Activated naive CD4-positive, alpha-beta T cell treated with anti-CD3 and anti-CD28 coated beads for 36 hours (primary cell): ENCODE measurements at regions of chr18 and their contacts with region 1.

Region 1: GRCh38 chr18:70454704-70455322 is 166.0 kb downstream of the SOCS6 start:
- DNase-seq: peak; percentile 45
- H3K4me3 Mint-ChIP-seq: no peak overlapping the region
- H3K27ac Mint-ChIP-seq: no peak overlapping the region
- H3K4me1 Mint-ChIP-seq: no peaks in the 10 kb centered on the region
- H3K27me3 Mint-ChIP-seq: peaks cover 4% of the 10 kb centered on the region

Region 2: GRCh38 chr18:68847219-68847837 is 1607.5 kb before region 1 on chr18:
- CTCF ChIA-PET with region 1: no interaction called
- intact Hi-C with region 1: loop called (anchors 2 kb)
- DNase-seq: no peak
- H3K4me3 Mint-ChIP-seq: no peak overlapping the region
- H3K27ac Mint-ChIP-seq: no peak overlapping the region
- H3K4me1 Mint-ChIP-seq: no peaks in the 10 kb centered on the region
- H3K27me3 Mint-ChIP-seq: no peaks in the 10 kb centered on the region

Region 3: GRCh38 chr18:69636529-69637301 is 818.1 kb before region 1 on chr18:
- CTCF ChIA-PET with region 1: no interaction called
- intact Hi-C with region 1: loop called (anchors 10 kb)
- DNase-seq: peak; percentile 34
- H3K4me3 Mint-ChIP-seq: no peak overlapping the region
- H3K27ac Mint-ChIP-seq: no peak overlapping the region
- H3K4me1 Mint-ChIP-seq: no peaks in the 10 kb centered on the region
- H3K27me3 Mint-ChIP-seq: no peaks in the 10 kb centered on the region

Region 4: DNA sequence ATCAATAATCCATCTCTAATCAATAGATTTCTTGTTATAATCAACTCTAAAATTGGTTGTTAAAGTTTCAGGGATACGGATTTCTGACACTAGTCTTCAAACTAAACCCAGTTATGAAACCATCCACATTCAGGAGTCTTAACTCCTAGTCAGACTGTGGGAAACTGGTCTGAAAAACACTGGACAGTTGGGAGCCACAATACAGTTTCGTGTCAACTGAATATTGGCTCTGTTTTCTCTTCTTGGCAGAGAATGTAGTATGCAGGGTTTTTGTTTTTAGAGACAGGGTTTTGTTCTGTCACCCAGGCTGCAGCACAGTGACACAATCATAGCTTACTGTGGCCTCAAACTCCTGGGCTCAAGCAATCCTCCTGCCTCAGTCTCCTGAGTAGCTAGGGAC is 372.4 kb before region 1 on chr18:
- CTCF ChIA-PET with region 1: no interaction called
- intact Hi-C with region 1: loop called (anchors 10 kb)
- DNase-seq: no peak
- H3K4me3 Mint-ChIP-seq: no peak overlapping the region
- H3K27ac Mint-ChIP-seq: no peak overlapping the region
- H3K4me1 Mint-ChIP-seq: no peaks in the 10 kb centered on the region
- H3K27me3 Mint-ChIP-seq: no peaks in the 10 kb centered on the region

Region 5: DNA sequence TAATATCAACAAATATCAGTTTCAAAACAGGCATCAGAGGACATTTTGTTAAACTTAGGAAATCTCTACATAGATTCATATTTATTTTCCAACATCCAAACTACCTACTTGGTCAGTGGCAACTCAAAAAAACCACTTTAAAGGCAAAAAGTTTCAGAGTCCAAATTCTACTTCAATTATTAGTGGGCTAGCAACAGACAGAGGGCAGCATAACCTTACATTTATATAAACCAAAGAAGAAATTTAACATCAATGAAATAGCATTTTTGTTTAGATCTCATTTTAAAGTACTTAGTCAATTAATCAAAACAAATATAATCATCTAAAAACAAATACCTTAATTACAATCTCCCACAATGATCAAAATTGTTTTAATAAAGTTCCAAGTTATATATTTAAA is 282.6 kb before region 1 on chr18:
- CTCF ChIA-PET with region 1: interaction called, 5 read pairs
- intact Hi-C with region 1: loop called (anchors 1 kb)
- DNase-seq: no peak
- H3K4me3 Mint-ChIP-seq: no peak overlapping the region
- H3K27ac Mint-ChIP-seq: no peak overlapping the region
- H3K4me1 Mint-ChIP-seq: no peaks in the 10 kb centered on the region
- H3K27me3 Mint-ChIP-seq: no peaks in the 10 kb centered on the region

Region 6: DNA sequence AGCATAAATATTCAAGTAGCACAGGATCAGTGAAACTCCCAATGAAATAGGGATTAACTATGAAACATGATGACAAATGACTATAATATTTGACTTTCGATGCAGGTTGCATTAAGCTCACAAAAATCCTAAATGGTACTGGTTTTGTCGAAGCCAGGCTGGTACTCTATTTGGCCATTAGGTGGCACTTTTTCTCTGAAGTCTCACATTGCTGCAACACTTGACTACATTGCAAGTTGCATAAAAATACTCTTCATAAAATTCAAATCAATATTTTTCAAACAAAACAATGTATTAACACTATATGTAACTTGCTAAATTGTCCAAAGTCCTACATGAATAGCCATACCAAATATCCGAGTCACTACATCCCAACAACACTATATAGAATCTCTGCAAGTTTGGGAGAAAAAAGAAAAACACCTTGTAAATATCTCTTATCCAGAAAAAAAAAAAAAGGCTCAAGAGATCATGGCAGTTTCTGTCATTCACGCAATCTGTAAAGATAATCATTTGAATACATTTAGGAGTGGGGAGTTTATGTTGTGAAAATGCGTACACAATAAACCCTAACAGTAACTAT is 258.9 kb before region 1 on chr18:
- CTCF ChIA-PET with region 1: interaction called, 12 read pairs
- intact Hi-C with region 1: loop called (anchors 1 kb)
- DNase-seq: peak; percentile 31
- H3K4me3 Mint-ChIP-seq: no peak overlapping the region
- H3K27ac Mint-ChIP-seq: no peak overlapping the region
- H3K4me1 Mint-ChIP-seq: peaks cover 14% of the 10 kb centered on the region
- H3K27me3 Mint-ChIP-seq: no peaks in the 10 kb centered on the region

Region 7: DNA sequence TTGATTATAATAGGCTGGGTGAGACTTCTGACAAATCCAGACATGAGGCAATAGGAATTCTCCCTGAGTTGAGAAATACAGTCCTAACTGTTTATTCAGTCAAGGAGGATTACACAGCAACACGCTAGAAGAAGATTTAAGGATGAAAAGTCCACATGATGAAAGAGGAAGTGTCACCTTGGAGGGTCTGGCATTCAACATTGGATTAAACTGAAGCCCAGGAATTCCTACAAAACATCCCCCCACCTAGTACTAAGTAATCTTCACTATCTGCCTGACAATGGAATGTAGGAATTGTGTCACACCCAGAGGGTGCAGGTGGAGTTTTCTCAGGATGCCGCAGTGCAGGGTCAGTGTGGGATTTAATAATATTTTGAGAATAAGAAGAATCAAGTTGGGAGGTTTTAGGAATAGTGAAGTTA is 23.6 kb before region 1 on chr18:
- CTCF ChIA-PET with region 1: interaction called, 17 read pairs
- intact Hi-C with region 1: no loop called
- DNase-seq: no peak
- H3K4me3 Mint-ChIP-seq: no peak overlapping the region
- H3K27ac Mint-ChIP-seq: no peak overlapping the region
- H3K4me1 Mint-ChIP-seq: no peaks in the 10 kb centered on the region
- H3K27me3 Mint-ChIP-seq: no peaks in the 10 kb centered on the region